Gastrocnemius medialis (tissue), 4 donors: ENCODE measurements at regions of chr17 and their contacts with region 1.

Region 1: GRCh38 chr17:40139566-40140058 is 725 bp upstream of the CASC3 start:
- DNase-seq: peak in 1 of 2 donors; percentile 35
- ATAC-seq: peak; percentile 17 to 34
- H3K4me3 ChIP-seq: peak overlapping the region; percentile 72 to 87 (median 77)
- H3K27ac ChIP-seq: peak overlapping the region; percentile 91 to 100 (median 96)
- H3K4me1 ChIP-seq: peaks cover 34% of the 10 kb centered on the region in 2 donors
- H3K27me3 ChIP-seq: no peaks in the 10 kb centered on the region
- CTCF ChIP-seq: peak in 1 of 5 experiments; percentile 18
- POLR2A ChIP-seq: no peak

Region 2: DNA sequence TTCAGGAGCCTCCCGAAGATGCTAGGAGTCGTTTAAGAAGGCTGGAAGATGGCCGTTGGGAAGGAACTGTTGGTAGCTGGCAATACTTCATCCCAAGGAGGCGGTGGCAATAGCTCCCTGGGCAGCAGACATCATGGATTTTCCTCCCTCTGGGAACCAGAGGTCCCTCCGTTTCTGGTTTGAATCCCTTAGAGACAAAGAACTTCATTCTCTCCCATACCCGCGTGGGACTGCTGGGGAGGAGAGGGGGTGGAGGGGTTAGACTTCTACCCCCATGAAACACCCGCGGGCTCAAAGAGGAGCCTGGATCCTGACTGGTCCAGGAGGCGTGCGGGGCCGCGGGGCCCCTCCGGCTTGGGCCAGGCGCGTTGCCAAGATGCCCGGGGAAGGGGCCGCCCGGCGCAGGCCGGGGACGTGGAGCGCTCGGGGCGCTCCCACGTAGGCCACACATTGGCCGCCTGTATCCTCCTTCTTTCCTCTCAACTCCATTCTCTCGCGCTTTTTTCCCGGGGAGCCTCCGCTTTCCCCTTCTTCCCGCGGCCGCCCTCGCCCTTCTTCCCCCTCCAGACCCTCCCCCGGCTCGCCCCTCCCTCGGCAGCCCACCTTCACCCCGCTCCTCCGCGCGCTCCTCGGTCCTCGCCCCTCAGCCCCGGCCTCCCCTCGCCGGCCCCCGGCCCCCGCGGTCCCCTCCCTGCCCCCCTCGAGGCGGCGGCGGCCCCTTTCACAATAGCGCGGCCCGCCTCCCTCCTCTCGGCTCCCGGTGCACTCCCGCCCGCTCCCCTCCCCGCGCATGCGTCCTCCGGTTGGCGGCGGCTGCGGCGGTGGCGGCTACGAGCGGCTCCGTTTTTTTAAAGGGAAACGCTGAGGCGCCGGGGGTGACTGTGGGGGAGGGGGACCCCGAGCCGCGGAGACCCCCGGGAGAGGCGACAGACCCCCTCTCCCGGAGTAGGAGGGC is 18.2 kb before region 1 on chr17 and contains the start of gene MSL1:
- in situ Hi-C with region 1: no loop called
- intact Hi-C with region 1: loop called (anchors 1 kb)
- DNase-seq: peak; percentile 84 to 89
- ATAC-seq: peak; percentile 75 to 76
- H3K4me3 ChIP-seq: peak within 1 kb of the TSS; percentile 69 to 100 (median 95)
- H3K27ac ChIP-seq: peak within 1 kb of the TSS; percentile 93 to 100 (median 99)
- H3K4me1 ChIP-seq: peaks cover 25 to 29% of the 10 kb centered on the region in 2 donors
- H3K27me3 ChIP-seq: no peaks in the 10 kb centered on the region
- CTCF ChIP-seq: no peak
- POLR2A ChIP-seq: peak; percentile 83 to 88
- total RNA-seq, gene MSL1: 75.7 to 96.3 (median 85.9) TPM